PC-3 (cell line): ENCODE measurements at regions of chr11 and their contacts with region 1.

Region 1: GRCh38 chr11:125091247-125091876 is 20.1 kb downstream of the TMEM218 start:
- DNase-seq: peak; percentile 62
- ATAC-seq: peak; percentile 82
- H3K4me3 ChIP-seq: no peak overlapping the region
- H3K27ac ChIP-seq: no peak overlapping the region
- H3K4me1 ChIP-seq: peaks cover 8% of the 10 kb centered on the region; the same call in 1 of the 2 replicates
- H3K27me3 ChIP-seq: no peaks in the 10 kb centered on the region
- CTCF ChIP-seq: peak; percentile 89

Region 2: DNA sequence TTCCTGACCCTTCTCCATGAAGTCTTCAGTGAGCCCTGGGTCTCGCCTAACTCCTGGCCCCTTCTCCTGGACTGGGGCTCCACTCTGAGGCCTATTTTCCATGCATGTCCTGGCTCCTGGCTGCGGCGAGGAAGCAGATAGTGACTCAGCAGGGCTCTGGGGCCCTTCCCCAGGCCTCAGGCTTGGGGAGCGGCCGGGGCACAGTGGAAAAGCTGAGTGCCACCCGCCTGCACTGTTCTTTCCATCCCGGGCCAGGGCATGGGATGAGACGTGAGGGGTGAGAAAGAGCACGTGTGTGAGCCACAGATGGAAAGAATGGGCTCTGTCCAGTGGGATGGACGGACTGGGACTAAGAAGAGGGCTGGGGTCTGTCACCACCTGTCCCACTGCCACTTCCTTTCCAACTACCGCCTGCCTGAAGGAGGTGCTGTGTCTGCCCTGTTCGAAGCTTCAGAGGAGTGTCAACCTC is 15.5 kb before region 1 on chr11:
- CTCF ChIA-PET with region 1: no interaction called
- POLR2A ChIA-PET with region 1: no interaction called
- intact Hi-C with region 1: no loop called
- DNase-seq: peak; percentile 35
- ATAC-seq: peak; percentile 50
- H3K4me3 ChIP-seq: no peak overlapping the region
- H3K27ac ChIP-seq: no peak overlapping the region
- H3K4me1 ChIP-seq: peaks cover 17% of the 10 kb centered on the region
- H3K27me3 ChIP-seq: no peaks in the 10 kb centered on the region
- CTCF ChIP-seq: 0 out of 2 replicates have a peak, but pooled peaks have one; percentile 15

Region 3: DNA sequence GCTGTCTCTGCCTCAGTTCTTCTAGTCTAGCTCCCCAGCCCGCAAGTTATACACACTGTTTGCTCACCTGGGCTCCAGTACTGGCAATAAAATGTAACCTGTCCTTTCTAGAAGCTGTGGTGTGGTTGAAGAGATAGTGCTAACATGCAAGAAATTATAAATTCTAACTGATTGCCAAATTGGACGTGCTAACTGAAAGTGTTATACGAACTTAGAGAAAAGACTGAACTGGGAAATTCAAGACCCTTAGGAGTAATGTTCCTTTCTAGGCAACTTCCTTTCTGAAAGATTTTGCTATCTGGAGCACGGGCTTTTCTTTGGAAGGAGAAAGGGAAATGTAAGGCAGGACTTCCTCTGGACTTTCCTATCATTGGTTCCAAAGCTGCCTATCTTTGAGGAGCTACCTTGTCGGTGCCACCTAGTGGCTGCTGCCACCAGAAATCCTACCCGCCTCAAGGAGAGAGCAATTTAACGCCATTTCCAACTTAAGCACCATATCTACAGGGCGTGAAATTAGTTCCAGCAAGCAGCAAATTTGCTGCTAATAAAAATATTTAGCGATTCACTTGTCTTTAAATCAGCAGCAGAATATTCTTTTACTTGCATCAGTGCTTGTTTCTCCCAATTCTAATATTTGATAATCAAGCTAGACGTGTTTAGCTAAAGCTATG is 32.7 kb after region 1 on chr11:
- CTCF ChIA-PET with region 1: interaction called, 10 read pairs
- POLR2A ChIA-PET with region 1: interaction called, 3 read pairs
- intact Hi-C with region 1: no loop called
- DNase-seq: peak; percentile 88
- ATAC-seq: peak; percentile 97
- H3K4me3 ChIP-seq: no peak overlapping the region
- H3K27ac ChIP-seq: no peak overlapping the region
- H3K4me1 ChIP-seq: peaks cover 11% of the 10 kb centered on the region
- H3K27me3 ChIP-seq: no peaks in the 10 kb centered on the region; the same call in 1 of the 2 replicates
- CTCF ChIP-seq: peak; percentile 87

Region 4: GRCh38 chr11:125141686-125142535 is 50.5 kb after region 1 on chr11:
- CTCF ChIA-PET with region 1: interaction called, 10 read pairs
- POLR2A ChIA-PET with region 1: no interaction called
- intact Hi-C with region 1: loop called (anchors 1 kb)
- DNase-seq: peak; percentile 63
- ATAC-seq: peak; percentile 93
- H3K4me3 ChIP-seq: no peak overlapping the region
- H3K27ac ChIP-seq: no peak overlapping the region
- H3K4me1 ChIP-seq: peaks cover 3% of the 10 kb centered on the region; the same call in 1 of the 2 replicates
- H3K27me3 ChIP-seq: peaks cover 18% of the 10 kb centered on the region; the same call in 1 of the 2 replicates
- CTCF ChIP-seq: peak; percentile 99